Activated naive CD4-positive, alpha-beta T cell treated with anti-CD3 and anti-CD28 coated beads for 36 hours (primary cell): ENCODE measurements at regions of chr9 and their contacts with region 1.

Region 1: GRCh38 chr9:89602978-89603766 is 1.6 kb upstream of the GADD45G start:
- DNase-seq: peak; percentile 95
- H3K4me3 Mint-ChIP-seq: peak overlapping the region; percentile 84
- H3K27ac Mint-ChIP-seq: peak overlapping the region; percentile 50
- H3K4me1 Mint-ChIP-seq: peaks cover 34% of the 10 kb centered on the region
- H3K27me3 Mint-ChIP-seq: peaks cover 3% of the 10 kb centered on the region

Region 2: DNA sequence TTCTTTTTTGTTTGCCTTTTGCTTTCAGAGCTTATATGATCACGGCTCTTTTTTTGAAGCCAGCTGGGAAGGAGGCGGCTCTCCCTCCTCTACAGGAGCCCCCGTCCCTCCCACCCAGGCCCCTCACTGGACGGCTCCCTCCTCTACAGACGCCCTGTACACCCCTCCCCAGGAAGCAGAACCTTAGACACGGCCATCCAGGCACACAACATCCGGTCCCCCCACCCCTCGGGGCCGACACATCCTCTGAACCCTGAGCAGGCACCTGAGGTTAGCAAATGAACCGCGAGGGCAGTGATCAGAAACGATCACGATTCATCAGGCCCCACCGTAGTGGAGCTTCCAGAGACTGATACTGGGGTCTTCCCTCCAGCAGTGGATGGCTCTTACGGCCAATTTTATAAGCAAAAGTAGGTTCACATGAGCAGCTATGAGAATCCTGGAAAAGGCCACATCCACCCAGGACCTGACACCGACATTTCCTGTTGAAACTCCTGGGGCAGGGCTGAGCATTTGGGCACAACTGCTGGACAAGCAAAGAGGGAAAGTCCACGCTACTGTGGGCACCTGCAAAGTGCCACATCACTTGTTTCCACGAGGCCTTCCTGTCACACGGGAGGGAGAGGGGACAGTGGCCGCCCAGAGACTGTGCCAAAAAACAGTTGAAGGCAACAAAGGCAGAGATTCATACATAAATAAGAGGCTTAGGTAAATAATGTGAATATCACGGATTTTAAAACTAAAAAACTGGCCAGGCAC is 184.1 kb before region 1 on chr9:
- CTCF ChIA-PET with region 1: no interaction called
- intact Hi-C with region 1: loop called (anchors 5 kb)
- DNase-seq: peak; percentile 82
- H3K4me3 Mint-ChIP-seq: peak overlapping the region; percentile 53
- H3K27ac Mint-ChIP-seq: peak overlapping the region; percentile 98
- H3K4me1 Mint-ChIP-seq: peaks cover 89% of the 10 kb centered on the region
- H3K27me3 Mint-ChIP-seq: no peaks in the 10 kb centered on the region

Region 3: DNA sequence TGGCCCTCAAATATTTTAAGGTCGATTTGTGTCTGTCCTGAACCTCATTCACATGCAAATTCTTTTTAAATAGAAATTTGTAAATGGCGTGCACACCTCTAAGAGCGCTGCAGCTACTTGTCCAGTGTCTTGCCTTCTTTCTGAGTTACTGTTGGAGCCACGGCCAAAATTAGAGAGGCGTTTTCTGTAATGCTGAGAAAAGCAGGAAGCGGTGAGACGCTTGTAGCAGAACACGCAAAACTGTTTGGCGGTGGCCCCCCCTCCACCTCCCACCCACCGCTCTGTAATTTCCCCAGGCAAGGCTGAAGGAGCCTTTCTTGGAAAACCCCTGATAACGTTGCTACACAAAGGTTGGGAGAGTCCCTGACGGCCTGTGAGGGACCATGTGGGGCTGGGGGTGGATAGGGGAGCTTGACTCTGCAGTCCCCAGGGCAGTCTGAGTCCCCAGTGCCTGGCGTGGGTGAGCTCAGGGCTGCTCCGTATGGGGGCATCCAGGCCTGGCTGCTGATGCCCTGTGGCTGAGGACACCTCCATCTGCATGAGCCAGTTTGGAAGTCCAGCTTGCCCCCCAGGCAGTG is 98.1 kb after region 1 on chr9:
- CTCF ChIA-PET with region 1: no interaction called
- intact Hi-C with region 1: loop called (anchors 1 kb)
- DNase-seq: peak; percentile 93
- H3K4me3 Mint-ChIP-seq: peak overlapping the region; percentile 50
- H3K27ac Mint-ChIP-seq: peak overlapping the region; percentile 85
- H3K4me1 Mint-ChIP-seq: peaks cover 30% of the 10 kb centered on the region
- H3K27me3 Mint-ChIP-seq: no peaks in the 10 kb centered on the region

Region 4: DNA sequence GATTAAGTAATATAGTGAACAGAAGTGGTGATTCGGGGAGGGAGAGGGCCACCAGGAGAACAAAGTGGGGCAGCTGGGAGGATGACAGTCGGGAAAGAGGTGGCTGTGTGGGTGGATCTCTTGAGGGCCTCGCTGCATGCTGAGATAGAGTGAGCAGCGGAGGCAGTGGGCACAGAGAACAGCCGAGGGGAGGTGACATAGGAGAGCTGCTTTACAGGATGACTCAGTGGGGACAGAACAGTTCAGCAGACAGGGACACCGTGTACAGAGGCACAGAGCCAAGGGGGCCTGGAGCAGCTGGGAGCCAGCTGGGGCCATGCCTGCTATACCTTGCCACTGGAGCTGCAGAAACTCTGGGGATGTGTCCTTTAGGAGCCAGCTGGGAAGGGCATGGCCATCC is 275.5 kb after region 1 on chr9:
- CTCF ChIA-PET with region 1: interaction called, 4 read pairs
- intact Hi-C with region 1: loop called (anchors 5 kb)
- DNase-seq: no peak
- H3K4me3 Mint-ChIP-seq: no peak overlapping the region
- H3K27ac Mint-ChIP-seq: no peak overlapping the region
- H3K4me1 Mint-ChIP-seq: no peaks in the 10 kb centered on the region
- H3K27me3 Mint-ChIP-seq: no peaks in the 10 kb centered on the region

Region 5: GRCh38 chr9:89999534-90000370 is 396.6 kb after region 1 on chr9:
- CTCF ChIA-PET with region 1: interaction called, 4 read pairs
- intact Hi-C with region 1: loop called (anchors 1 kb)
- DNase-seq: peak; percentile 86
- H3K4me3 Mint-ChIP-seq: peak overlapping the region; percentile 47
- H3K27ac Mint-ChIP-seq: peak overlapping the region; percentile 72
- H3K4me1 Mint-ChIP-seq: peaks cover 26% of the 10 kb centered on the region
- H3K27me3 Mint-ChIP-seq: no peaks in the 10 kb centered on the region

Region 6: DNA sequence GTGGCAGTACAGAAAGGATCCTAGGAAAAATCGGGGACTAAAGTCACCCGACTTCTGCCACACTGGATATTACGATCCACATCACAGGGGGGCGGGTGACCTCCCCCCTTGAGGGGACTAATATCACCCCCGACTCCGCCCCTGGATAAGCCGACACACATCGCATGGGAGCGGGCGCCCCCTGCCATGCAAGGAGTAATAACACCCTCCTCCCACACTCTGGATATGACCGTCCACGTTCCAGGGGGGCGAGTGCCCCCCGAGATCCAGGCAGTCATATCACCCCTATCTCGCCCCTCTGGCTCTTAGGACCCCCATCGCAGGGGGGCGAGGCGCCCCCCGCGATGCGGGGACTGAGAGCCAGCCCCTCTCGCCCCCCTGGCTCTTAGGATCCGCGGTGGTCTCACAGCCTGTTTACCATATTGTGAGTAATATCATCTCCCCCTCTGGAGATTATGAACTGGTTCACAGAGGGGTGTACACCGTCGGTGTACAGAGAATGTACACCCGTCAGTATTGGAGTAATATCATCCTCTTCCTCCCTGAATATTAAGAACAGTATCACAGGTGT is 616.5 kb after region 1 on chr9:
- CTCF ChIA-PET with region 1: interaction called, 3 read pairs
- intact Hi-C with region 1: loop called (anchors 5 kb)
- DNase-seq: peak; percentile 35
- H3K4me3 Mint-ChIP-seq: no peak overlapping the region
- H3K27ac Mint-ChIP-seq: no peak overlapping the region
- H3K4me1 Mint-ChIP-seq: no peaks in the 10 kb centered on the region
- H3K27me3 Mint-ChIP-seq: peaks cover 4% of the 10 kb centered on the region

Region 7: DNA sequence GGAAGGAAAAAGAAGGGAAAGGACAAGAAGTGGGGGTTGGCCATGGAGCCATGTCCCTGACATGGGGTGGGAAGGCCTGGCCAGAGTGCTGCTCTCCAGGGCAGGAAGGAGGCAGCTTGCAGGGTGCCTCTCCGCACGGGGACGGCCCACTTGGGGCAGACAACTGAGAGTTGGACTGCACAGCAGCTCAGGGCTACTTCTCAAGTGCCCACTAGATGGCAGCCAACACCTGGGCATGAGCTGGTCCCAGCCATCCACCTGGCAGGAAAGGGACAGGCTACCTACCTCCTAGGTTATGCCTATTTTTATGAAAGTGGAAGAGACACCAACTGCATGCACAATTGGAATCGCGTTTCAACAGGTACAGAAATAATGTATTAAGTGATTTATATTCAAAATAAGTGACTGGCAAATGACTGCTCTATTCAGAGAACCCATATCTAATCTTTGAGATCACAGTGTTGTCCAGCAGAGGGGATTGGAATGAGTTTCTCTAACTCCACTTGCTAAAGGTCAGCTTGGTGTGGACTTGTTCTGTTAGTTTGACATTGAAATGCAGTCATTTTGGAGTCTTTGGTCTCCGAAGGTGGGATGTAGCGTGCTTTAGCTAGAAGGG is 1311.8 kb after region 1 on chr9:
- CTCF ChIA-PET with region 1: no interaction called
- intact Hi-C with region 1: no loop called
- DNase-seq: peak; percentile 82
- H3K4me3 Mint-ChIP-seq: no peak overlapping the region
- H3K27ac Mint-ChIP-seq: no peak overlapping the region
- H3K4me1 Mint-ChIP-seq: no peaks in the 10 kb centered on the region
- H3K27me3 Mint-ChIP-seq: no peaks in the 10 kb centered on the region